Psoas muscle (tissue), 8 donors: ENCODE measurements at regions of chr3 and their contacts with region 1.

Region 1: GRCh38 chr3:23945903-23946751 is 1.0 kb downstream of the NR1D2 start:
- DNase-seq: peak; percentile 98 to 99
- ATAC-seq: peak; percentile 85 to 93 (median 90)
- H3K4me3 ChIP-seq: peak overlapping the region; percentile 81
- H3K27ac ChIP-seq: peak overlapping the region; percentile 94
- H3K4me1 ChIP-seq: peaks cover 59% of the 10 kb centered on the region
- H3K27me3 ChIP-seq: no peaks in the 10 kb centered on the region
- CTCF ChIP-seq: no peak

Region 2: GRCh38 chr3:23865595-23866450 is 80.3 kb before region 1 on chr3:
- intact Hi-C with region 1: no loop called
- DNase-seq: no peak
- ATAC-seq: peak; percentile 59 to 71 (median 66)
- H3K4me3 ChIP-seq: no peak overlapping the region
- H3K27ac ChIP-seq: peak overlapping the region; percentile 74
- H3K4me1 ChIP-seq: peaks cover 66% of the 10 kb centered on the region
- H3K27me3 ChIP-seq: no peaks in the 10 kb centered on the region
- CTCF ChIP-seq: no peak

Region 3: GRCh38 chr3:23916886-23917678 is 29.0 kb before region 1 on chr3 and contains the starts of genes NKIRAS1 and RPL15:
- intact Hi-C with region 1: loop called (anchors 1 to 2 kb)
- DNase-seq: peak; percentile 97 to 99
- ATAC-seq: peak; percentile 97 to 99 (median 98)
- H3K4me3 ChIP-seq: peak within 1 kb of the TSS; percentile 85
- H3K27ac ChIP-seq: peak within 1 kb of the TSS; percentile 97
- H3K4me1 ChIP-seq: peaks cover 35% of the 10 kb centered on the region
- H3K27me3 ChIP-seq: no peaks in the 10 kb centered on the region
- CTCF ChIP-seq: peak; percentile 46
- total RNA-seq, gene NKIRAS1: 19.8 to 30.7 (median 21.3) TPM
- total RNA-seq, gene RPL15: 1,021 to 1,350 (median 1,156) TPM

Region 4: GRCh38 chr3:24220859-24221657 is 274.9 kb after region 1 on chr3:
- intact Hi-C with region 1: no loop called
- DNase-seq: peak; percentile 21 to 58
- ATAC-seq: peak; percentile 87 to 95 (median 92)
- H3K4me3 ChIP-seq: no peak overlapping the region
- H3K27ac ChIP-seq: peak overlapping the region; percentile 56
- H3K4me1 ChIP-seq: peaks cover 11% of the 10 kb centered on the region
- H3K27me3 ChIP-seq: no peaks in the 10 kb centered on the region
- CTCF ChIP-seq: no peak